ENCODE measurements at regions of chr1 and their contacts with region 1.

Region 1: GRCh38 chr1:33127001-33127791 is 46.2 kb downstream of the AZIN2 start:
- DNase-seq: peak; percentile 99
- ATAC-seq: peak; percentile 99
- H3K4me3 ChIP-seq: peak overlapping the region; percentile 82 to 100 (median 92)
- H3K27ac ChIP-seq: peak overlapping the region; percentile 94
- H3K4me1 ChIP-seq: peaks cover 45% of the 10 kb centered on the region
- H3K27me3 ChIP-seq: no peaks in the 10 kb centered on the region; a peak in 1 of 5 replicates
- CTCF ChIP-seq: peak; percentile 100
- EP300 ChIP-seq: peak in 1 of 2 experiments; percentile 67; a peak in 2 of 4 replicates
- POLR2A ChIP-seq: peak; percentile 88 to 92
- RAD21 ChIP-seq: no peak

Region 2: DNA sequence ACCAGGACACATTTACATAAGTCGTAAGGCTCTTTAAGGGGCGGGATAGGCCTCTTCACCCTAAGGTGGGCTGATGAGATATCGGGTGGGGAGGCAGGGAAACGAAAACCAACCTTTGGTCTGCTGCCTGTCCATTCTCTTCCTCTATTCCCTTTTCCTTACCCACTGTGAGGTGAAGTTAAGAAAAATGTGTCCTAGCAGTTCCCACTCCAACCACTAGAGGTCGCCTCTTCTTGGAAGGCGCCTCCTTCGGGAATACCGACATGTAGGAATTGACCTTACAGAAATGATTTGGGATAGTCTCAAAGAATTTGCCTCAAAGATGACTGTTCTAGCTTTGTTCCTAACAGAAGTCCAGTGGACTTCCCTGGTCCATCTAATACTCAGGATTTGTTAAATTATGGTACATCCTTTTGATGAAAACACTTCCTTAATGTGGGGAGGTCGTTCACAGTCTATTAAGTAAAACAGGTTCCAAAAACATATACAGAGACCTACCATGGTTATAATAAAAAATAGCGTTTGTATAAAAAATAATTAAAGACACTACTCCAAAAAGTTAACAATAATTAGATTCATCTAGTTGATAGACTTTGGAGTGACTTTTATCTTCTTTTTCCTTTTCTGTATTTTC is 32.1 kb before region 1 on chr1:
- CTCF ChIA-PET with region 1: no interaction called
- POLR2A ChIA-PET with region 1: no interaction called
- in situ Hi-C with region 1: no loop called
- intact Hi-C with region 1: loop called (anchors 1 kb)
- DNase-seq: peak; percentile 37
- ATAC-seq: peak; percentile 62
- H3K4me3 ChIP-seq: no peak overlapping the region
- H3K27ac ChIP-seq: no peak overlapping the region
- H3K4me1 ChIP-seq: no peaks in the 10 kb centered on the region
- H3K27me3 ChIP-seq: no peaks in the 10 kb centered on the region; a peak in 1 of 5 replicates
- CTCF ChIP-seq: peak; percentile 79
- EP300 ChIP-seq: no peak
- POLR2A ChIP-seq: no peak
- RAD21 ChIP-seq: 0 out of 2 replicates have a peak, but pooled peaks have one; percentile 23

Region 3: DNA sequence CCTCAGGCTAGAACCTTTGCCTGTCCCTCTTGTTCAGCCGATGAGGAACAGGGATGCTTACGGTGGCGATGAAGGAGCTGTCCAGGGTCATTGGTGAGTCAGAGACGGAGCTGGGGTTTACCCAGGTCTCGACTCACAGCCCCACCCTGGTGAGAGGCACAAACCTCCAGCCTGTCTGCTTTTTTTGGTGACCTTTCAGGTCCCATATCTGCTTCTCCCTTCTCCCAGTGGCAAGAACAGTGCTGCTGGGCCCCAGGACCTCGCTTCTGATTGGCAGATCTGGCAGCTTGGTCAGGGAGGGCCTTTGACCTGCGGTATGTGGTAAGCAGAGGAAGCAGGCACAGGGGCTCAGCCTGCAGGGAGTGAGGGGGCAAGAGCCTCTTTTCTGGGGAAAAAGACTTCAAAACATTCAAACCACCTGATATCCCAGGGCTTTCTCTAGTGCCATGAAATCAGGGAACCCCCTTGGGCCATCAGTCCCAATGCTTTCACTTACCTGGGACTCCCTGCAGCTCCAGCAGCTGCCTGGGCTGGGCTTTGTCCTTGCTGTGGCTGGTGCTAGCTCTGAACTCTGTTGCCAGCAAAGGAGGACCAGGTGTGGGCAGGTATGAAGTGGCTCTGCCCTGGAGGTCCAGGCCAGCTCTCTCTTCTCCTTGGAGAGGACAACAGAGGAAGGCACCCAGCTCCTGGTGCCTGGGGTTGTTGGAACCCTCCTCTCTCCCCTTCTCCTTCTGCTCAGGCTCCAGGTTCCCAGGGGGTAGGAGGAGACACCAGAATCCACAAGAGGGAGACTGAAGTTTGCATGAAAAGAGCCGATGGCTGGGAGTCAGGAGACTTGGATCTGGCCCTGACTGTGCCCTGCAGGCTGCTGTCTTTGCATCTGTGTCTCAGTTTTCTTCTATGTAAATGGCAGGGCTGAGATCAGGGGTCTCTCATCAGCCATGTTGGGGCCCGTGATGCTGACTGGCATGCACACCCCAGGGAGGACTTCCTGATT is 13.3 kb after region 1 on chr1:
- CTCF ChIA-PET with region 1: no interaction called
- POLR2A ChIA-PET with region 1: interaction called, 19 read pairs
- in situ Hi-C with region 1: no loop called
- intact Hi-C with region 1: no loop called
- DNase-seq: peak; percentile 32
- ATAC-seq: peak; percentile 93
- H3K4me3 ChIP-seq: no peak overlapping the region
- H3K27ac ChIP-seq: no peak overlapping the region
- H3K4me1 ChIP-seq: peaks cover 14% of the 10 kb centered on the region
- H3K27me3 ChIP-seq: no peaks in the 10 kb centered on the region
- CTCF ChIP-seq: peak; percentile 25
- EP300 ChIP-seq: no peak
- POLR2A ChIP-seq: no peak
- RAD21 ChIP-seq: no peak

Region 4: GRCh38 chr1:33161061-33161681 is 34.0 kb after region 1 on chr1:
- CTCF ChIA-PET with region 1: no interaction called
- POLR2A ChIA-PET with region 1: no interaction called
- in situ Hi-C with region 1: no loop called
- intact Hi-C with region 1: no loop called
- DNase-seq: no peak
- ATAC-seq: no peak
- H3K4me3 ChIP-seq: no peak overlapping the region
- H3K27ac ChIP-seq: no peak overlapping the region
- H3K4me1 ChIP-seq: peaks cover 4% of the 10 kb centered on the region
- H3K27me3 ChIP-seq: no peaks in the 10 kb centered on the region
- CTCF ChIP-seq: no peak
- EP300 ChIP-seq: no peak
- POLR2A ChIP-seq: no peak
- RAD21 ChIP-seq: no peak

Region 5: GRCh38 chr1:33181921-33182341 is 54.7 kb after region 1 on chr1 and contains the start of gene TRIM62:
- CTCF ChIA-PET with region 1: no interaction called
- POLR2A ChIA-PET with region 1: interaction called, 17 read pairs
- in situ Hi-C with region 1: no loop called
- intact Hi-C with region 1: no loop called
- DNase-seq: peak; percentile 50
- ATAC-seq: peak; percentile 78
- H3K4me3 ChIP-seq: peak within 1 kb of the TSS; percentile 53 to 81 (median 80)
- H3K27ac ChIP-seq: no peak within 1 kb of the TSS
- H3K4me1 ChIP-seq: peaks cover 23% of the 10 kb centered on the region
- H3K27me3 ChIP-seq: peaks cover 0 to 5% of the 10 kb centered on the region in 2 experiments; a peak in 1 of 5 replicates
- CTCF ChIP-seq: no peak
- EP300 ChIP-seq: no peak
- POLR2A ChIP-seq: peak in 1 of 2 experiments; percentile 55; a peak in 2 of 4 replicates
- RAD21 ChIP-seq: no peak
- total RNA-seq, gene TRIM62: 0.53 and 1.1 TPM in 2 replicates

Region 6: DNA sequence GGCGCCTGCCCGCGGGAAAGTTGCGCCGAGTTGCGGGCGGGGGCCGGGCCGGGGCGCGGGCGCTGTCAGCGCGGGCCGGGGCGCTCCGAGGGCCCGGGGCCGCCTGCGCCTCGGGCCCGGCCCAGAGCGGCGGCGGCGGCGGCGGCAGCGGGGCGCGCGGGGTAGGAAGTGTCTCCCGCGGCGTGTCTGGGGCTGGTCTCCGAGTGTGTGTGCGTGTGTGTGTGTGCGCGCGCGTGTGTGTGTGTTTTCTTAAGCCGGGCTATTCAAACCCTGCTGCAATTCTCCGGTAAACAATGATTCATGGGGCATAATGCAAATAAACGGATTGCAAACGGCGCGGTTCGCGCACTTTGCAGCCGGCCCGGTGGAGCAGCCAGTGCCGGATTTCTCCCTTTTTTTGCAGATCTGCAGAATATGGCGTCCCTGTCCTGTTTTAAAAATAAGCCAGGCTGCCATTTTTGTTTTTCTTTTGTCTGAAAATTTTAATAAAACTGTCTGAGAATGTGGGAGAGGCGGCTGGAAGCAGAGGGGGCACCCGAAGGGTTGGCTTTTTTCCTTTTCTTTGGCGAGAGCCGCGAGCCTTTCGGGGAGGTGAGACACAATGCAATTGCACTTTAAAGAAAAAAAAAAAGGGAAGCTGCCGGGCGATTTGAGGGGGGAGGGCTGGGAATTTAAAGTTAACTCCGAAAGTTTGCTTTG is 129.7 kb after region 1 on chr1:
- CTCF ChIA-PET with region 1: no interaction called
- POLR2A ChIA-PET with region 1: interaction called, 5 read pairs
- in situ Hi-C with region 1: no loop called
- intact Hi-C with region 1: loop called (anchors 10 kb)
- DNase-seq: peak; percentile 88
- ATAC-seq: peak; percentile 21
- H3K4me3 ChIP-seq: peak overlapping the region; percentile 72 to 98 (median 86)
- H3K27ac ChIP-seq: peak overlapping the region; percentile 97
- H3K4me1 ChIP-seq: peaks cover 53% of the 10 kb centered on the region
- H3K27me3 ChIP-seq: no peaks in the 10 kb centered on the region; a peak in 1 of 5 replicates
- CTCF ChIP-seq: no peak
- EP300 ChIP-seq: peak in 1 of 2 experiments; percentile 67; a peak in 2 of 4 replicates
- POLR2A ChIP-seq: peak; percentile 59 to 70; a peak in 3 of 4 replicates
- RAD21 ChIP-seq: no peak

Region 7: GRCh38 chr1:33349778-33350610 is 222.8 kb after region 1 on chr1:
- CTCF ChIA-PET with region 1: no interaction called
- POLR2A ChIA-PET with region 1: no interaction called
- in situ Hi-C with region 1: no loop called
- intact Hi-C with region 1: loop called (anchors 1 kb)
- DNase-seq: peak; percentile 62
- ATAC-seq: peak; percentile 78
- H3K4me3 ChIP-seq: peak overlapping the region; percentile 60 to 88 (median 88)
- H3K27ac ChIP-seq: peak overlapping the region; percentile 69
- H3K4me1 ChIP-seq: peaks cover 67% of the 10 kb centered on the region
- H3K27me3 ChIP-seq: no peaks in the 10 kb centered on the region; a peak in 1 of 5 replicates
- CTCF ChIP-seq: peak; percentile 29
- EP300 ChIP-seq: no peak
- POLR2A ChIP-seq: peak; percentile 77 to 92
- RAD21 ChIP-seq: peak; percentile 31; the same call in 1 of the 2 replicates

Region 8: DNA sequence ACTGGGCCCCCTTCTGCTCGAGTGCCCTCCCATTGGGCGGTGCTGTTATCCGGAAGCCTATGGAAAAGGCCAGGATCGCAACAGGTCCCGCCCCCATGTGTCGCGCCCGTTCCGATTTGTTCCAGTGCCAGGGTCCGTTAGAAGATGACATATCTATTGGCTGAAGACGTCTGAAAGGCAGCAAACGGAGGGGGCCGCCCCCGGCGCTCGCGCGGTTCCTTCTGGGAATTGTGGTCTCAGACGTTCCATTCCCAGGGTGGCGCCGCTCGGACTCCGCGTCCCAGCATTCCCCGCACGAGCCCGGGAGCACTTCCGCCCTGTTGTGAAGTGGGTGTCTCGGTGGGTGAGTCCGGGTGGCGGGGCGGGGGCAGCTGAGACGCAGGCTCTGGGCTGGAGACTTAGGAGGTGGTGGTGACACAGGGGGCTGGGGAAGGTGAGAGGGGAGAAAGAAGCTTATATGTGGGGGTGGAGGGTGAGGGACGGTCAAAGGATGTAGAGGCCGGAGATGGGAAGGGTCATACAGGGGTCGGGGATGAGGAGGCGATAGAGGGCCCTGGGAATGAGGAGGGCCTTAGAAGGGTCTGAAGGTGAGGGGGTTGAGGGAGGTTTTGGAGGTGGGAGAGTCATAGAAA is 345.3 kb after region 1 on chr1 and contains the start of gene ZSCAN20:
- CTCF ChIA-PET with region 1: no interaction called
- POLR2A ChIA-PET with region 1: interaction called, 9 read pairs
- in situ Hi-C with region 1: no loop called
- intact Hi-C with region 1: loop called (anchors 5 kb)
- DNase-seq: peak; percentile 96
- ATAC-seq: peak; percentile 97
- H3K4me3 ChIP-seq: peak within 1 kb of the TSS; percentile 66 to 91 (median 78)
- H3K27ac ChIP-seq: no peak within 1 kb of the TSS
- H3K4me1 ChIP-seq: peaks cover 29% of the 10 kb centered on the region
- H3K27me3 ChIP-seq: peaks cover 0 to 2% of the 10 kb centered on the region in 2 experiments; a peak in 1 of 5 replicates
- CTCF ChIP-seq: no peak
- EP300 ChIP-seq: no peak
- POLR2A ChIP-seq: no peak; a peak in 1 of 4 replicates
- RAD21 ChIP-seq: no peak
- total RNA-seq, gene ZSCAN20: 2.8 TPM in 2 replicates

Measured in HepG2 (cell line).